Right ventricle myocardium inferior (tissue), 1 donor: ENCODE measurements at regions of chr4 and their contacts with region 1.

Region 1: DNA sequence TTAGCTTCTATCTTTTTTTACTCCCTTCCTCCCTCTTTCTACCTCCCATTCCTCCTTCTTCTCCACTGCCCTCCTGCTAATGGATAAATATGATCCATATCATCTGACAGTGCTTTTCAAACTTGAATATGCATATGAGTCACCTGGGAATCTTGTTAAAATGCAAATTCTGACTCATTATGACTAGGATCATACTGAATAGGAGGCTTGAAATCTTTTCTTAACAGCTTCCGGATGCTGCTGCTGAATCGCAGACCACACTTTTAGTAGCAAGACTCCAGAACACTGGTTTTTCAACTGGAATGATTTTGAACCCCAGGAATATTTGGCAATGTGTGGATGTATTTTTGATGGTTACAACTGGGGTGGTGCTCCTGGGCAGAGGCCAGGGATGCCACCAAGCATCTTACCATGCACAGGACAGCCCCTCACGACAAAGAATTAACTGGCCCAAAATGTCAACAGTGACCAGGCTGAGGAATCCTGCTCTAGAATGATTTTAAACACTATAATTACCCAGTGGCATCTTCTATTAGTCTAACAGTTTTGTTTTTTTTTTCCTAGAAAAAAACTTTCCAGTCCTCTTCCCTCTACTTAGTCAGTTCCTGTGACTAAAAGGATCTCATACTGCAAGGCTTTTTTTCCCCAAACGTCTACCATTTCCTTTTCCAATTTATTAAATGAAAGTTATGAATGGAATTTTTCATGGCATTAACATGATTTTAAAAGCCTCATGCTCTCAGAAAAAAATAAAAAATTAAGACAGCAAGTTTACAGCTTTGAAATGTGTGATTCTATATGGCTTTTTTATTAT is 10.6 kb upstream of the PYURF start:
- DNase-seq: no peak
- ATAC-seq: no peak

Region 2: GRCh38 chr4:88659055-88659889 is 125.1 kb after region 1 on chr4:
- intact Hi-C with region 1: loop called (anchors 1 kb)
- DNase-seq: no peak
- ATAC-seq: peak; percentile 92

Region 3: DNA sequence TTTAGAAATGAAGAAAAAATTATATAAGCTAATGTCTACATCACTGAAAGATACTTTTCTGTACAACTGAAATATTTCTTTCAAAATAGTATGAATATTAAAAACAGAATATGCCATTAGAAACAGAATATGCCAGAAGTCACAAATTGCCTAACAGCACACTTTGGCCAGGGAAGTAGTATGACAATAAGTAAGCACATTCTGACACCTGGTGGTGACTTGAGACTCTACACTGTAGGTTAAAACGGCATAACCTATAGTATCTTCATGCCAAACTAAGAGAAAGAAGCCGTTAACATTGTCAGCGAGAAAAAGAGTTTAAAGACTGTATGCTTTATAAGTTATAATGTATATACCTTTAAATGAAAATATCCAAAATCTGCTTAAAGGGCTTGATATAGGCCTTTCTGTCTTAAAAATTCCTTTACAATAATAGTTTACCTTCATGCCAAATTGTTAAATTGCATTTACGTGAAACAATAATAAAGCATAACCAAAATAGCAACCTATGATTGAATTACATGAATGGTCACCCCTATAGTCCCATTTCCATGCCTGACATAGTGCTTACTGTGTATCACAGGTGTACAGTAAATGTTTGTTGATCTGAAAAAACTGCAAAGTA is 490.0 kb after region 1 on chr4:
- intact Hi-C with region 1: loop called (anchors 10 kb)
- DNase-seq: no peak
- ATAC-seq: peak; percentile 96